PC-9 (cell line): ENCODE measurements at regions of chr5 and their contacts with region 1.

Region 1: GRCh38 chr5:129125810-129126209 is 31.3 kb downstream of the ISOC1 start:
- DNase-seq: no peak
- H3K4me3 ChIP-seq: no peak overlapping the region
- H3K27ac ChIP-seq: no peak overlapping the region
- H3K4me1 ChIP-seq: no peaks in the 10 kb centered on the region
- H3K27me3 ChIP-seq: no peaks in the 10 kb centered on the region
- CTCF ChIP-seq: 0 out of 2 replicates have a peak, but pooled peaks have one; percentile 11

Region 2: DNA sequence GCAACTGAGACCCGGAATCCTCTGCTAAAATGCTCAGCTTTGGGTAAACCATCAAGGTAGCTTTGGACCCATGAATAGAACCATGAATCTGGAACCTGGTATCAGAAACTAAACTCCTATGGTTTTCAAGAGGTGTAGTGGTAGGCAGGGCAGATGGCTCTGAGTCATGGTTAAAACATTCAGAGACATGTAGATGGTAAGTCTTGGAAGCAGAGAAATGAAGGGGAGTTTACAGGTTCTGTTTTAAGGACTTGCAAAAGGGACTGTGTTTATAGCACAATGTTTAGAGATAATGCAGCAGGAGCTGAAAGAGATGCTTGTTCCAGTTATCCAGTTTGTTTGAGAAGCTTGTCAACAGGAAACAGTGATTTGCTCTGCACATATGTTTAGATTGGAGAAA is 551.8 kb before region 1 on chr5:
- CTCF ChIA-PET with region 1: no interaction called
- POLR2A ChIA-PET with region 1: no interaction called
- intact Hi-C with region 1: no loop called
- DNase-seq: no peak
- H3K4me3 ChIP-seq: no peak overlapping the region
- H3K27ac ChIP-seq: no peak overlapping the region
- H3K4me1 ChIP-seq: peaks cover 10% of the 10 kb centered on the region; the same call in 1 of the 2 replicates
- H3K27me3 ChIP-seq: no peaks in the 10 kb centered on the region
- CTCF ChIP-seq: no peak

Region 3: DNA sequence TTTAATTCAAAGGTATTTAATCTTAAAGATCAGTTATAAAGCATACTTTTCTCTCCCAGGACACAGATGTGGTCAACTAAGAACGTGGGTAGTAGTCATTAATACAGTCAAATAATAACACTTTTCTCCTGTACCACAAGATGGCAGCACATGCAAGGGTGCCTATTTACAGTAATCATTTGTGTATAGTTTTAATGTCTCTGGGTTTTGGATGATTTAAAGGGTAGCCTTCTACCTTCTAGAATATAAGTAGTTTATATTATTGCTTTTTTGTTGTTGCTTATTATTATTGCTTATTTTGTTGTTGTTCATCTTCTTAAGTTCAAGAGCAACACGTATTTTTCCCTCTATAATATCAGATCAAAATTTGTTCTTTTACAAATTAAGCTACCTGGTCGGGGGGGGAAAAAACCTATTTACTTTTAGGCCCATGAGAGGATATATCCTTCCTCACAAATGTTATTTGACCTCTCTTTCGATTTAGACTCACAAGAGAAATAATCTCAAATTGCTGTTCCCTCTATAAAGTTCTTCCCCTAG is 220.2 kb before region 1 on chr5:
- CTCF ChIA-PET with region 1: no interaction called
- POLR2A ChIA-PET with region 1: no interaction called
- intact Hi-C with region 1: loop called (anchors 5 kb)
- DNase-seq: peak; percentile 10 to 48
- H3K4me3 ChIP-seq: no peak overlapping the region
- H3K27ac ChIP-seq: no peak overlapping the region
- H3K4me1 ChIP-seq: no peaks in the 10 kb centered on the region
- H3K27me3 ChIP-seq: no peaks in the 10 kb centered on the region
- CTCF ChIP-seq: peak; percentile 88

Region 4: GRCh38 chr5:129917224-129917623 is 791.4 kb after region 1 on chr5:
- CTCF ChIA-PET with region 1: no interaction called
- POLR2A ChIA-PET with region 1: no interaction called
- intact Hi-C with region 1: no loop called
- DNase-seq: no peak
- H3K4me3 ChIP-seq: no peak overlapping the region
- H3K27ac ChIP-seq: no peak overlapping the region
- H3K4me1 ChIP-seq: no peaks in the 10 kb centered on the region
- H3K27me3 ChIP-seq: no peaks in the 10 kb centered on the region
- CTCF ChIP-seq: no peak